Cardiac septum (tissue), 1 donor: ENCODE measurements at regions of chr5 and their contacts with region 1.

Region 1: GRCh38 chr5:82225525-82226172 is 52.5 kb downstream of the RPS23 start:
- DNase-seq: no peak

Region 2: GRCh38 chr5:81425569-81425968 is 800.1 kb before region 1 on chr5:
- intact Hi-C with region 1: loop called (anchors 10 kb)
- DNase-seq: no peak

Region 3: DNA sequence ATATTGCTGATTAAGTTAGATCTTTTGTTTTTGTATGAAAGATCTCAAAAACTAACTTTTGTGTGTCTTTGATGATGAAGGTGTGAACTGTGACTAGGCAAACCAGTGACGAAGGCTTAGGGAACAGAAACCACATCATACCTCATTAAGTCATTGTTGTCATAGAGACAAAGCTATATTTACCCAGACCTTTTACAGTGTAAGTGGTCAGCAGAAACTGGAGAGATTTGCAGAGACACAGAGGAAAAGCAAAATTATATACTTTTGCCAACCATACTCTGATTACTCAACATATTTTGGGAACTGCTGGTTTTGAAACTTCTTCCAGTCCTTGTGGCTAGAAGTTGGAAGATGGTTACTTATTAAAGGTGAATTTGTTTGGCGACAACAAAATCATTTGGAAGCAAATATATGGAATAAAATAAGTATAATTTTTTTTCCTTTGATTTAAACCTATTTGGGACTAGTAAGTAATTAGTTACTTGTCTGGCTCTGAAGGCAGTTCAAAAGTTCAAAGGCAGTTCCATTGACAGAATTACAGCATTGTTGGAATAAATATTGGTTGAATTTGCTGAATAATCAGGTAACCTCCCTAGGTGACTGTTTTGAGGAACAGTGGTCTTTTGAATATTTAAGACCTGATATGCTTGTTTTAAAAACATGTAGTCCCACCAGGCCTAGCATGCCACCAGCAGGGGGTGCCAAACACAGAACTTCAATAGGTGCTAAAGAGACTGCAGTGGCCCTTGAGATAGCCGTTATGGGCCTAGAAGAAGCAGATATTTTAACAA is 51.3 kb before region 1 on chr5:
- intact Hi-C with region 1: loop called (anchors 10 kb)
- DNase-seq: no peak

Region 4: DNA sequence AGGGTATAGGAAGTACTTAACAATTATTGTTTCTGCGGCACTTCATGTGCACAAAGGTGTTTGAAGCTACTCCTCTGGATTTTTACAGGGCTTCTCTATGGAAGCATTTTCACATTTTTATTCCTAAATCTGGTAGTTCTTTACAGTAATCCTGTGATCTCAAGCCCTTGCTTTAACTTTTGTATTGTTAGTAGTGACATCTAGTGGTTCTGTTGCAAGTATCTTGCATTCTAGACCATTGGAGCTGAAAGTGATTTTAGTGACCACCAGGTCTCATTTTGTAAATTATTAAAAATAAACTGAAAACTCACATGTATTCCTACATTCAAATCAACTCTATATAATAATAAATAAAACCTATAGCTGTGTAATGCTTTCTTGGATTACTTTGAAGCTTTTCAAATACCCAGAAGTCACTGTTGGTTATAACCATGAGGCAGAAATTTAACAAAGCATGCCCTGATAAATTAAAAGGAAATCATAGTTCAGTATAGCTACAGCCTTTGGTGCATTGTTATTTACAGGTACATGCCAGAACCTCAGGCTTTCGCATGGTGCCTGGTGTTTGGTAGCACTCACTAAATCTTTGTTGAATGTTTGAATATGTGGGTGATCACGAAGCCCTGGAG is 33.6 kb after region 1 on chr5:
- intact Hi-C with region 1: no loop called
- DNase-seq: no peak

Region 5: GRCh38 chr5:82312373-82312856 is 86.8 kb after region 1 on chr5:
- intact Hi-C with region 1: no loop called
- DNase-seq: no peak